ENCODE measurements at regions of chr2 and their contacts with region 1.

Region 1: DNA sequence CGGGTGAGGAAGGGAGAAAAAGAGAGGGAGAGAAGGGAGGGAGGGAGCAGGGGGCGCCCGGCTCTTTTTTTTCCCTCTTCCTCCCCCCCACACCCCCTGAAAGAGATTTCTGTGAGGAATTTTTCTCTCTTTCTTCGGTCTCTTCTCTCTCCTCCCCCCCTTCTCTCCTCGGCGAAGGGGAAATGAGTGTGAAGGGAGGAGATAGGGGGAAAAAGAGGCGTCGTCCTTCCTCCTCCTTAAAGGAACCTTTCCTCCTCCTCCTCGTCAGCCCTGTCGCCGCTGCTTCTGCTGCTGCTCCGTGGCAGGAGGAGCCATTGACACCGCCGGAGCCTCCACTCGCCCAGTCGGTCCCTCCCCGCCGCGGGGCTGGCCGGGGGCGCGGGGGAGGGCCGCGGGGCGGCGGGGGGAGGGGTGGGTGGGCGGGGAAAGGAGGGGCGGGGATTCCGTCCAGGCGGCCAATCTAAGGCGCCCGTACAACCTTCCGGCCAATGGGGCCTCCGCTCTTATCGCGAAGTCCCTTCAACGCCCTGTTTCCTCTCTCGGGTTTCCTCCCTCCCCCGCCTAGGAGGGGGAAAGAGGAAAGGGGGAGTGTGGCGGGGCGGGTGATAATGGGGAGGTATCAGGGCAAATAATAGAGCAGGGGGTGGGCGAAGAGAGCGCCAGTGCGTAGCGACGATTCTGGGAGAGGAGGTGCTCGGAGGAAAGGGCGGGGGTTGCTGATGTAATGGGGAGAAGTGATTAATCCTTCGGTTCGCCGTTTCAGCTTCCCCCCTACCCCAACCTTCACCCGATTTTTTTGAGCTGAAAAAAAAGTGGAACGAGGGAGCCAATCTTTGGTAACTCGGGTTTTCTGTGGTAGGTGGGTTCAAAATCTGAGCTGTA is at the start of gene FBXO11:
- DNase-seq: peak; percentile 94
- H3K4me3 Mint-ChIP-seq: peak within 1 kb of the TSS; percentile 88
- H3K27ac Mint-ChIP-seq: peak within 1 kb of the TSS; percentile 93
- H3K4me1 Mint-ChIP-seq: peaks cover 40% of the 10 kb centered on the region
- H3K27me3 Mint-ChIP-seq: no peaks in the 10 kb centered on the region
- total RNA-seq, gene FBXO11: 50.1 and 56.1 TPM in 2 replicates

Region 2: GRCh38 chr2:46943881-46944798 is 962.3 kb before region 1 on chr2:
- intact Hi-C with region 1: loop called (anchors 2 kb)
- DNase-seq: peak; percentile 75
- H3K4me3 Mint-ChIP-seq: peak overlapping the region; percentile 99
- H3K27ac Mint-ChIP-seq: peak overlapping the region; percentile 99
- H3K4me1 Mint-ChIP-seq: peaks cover 59% of the 10 kb centered on the region
- H3K27me3 Mint-ChIP-seq: no peaks in the 10 kb centered on the region

Region 3: DNA sequence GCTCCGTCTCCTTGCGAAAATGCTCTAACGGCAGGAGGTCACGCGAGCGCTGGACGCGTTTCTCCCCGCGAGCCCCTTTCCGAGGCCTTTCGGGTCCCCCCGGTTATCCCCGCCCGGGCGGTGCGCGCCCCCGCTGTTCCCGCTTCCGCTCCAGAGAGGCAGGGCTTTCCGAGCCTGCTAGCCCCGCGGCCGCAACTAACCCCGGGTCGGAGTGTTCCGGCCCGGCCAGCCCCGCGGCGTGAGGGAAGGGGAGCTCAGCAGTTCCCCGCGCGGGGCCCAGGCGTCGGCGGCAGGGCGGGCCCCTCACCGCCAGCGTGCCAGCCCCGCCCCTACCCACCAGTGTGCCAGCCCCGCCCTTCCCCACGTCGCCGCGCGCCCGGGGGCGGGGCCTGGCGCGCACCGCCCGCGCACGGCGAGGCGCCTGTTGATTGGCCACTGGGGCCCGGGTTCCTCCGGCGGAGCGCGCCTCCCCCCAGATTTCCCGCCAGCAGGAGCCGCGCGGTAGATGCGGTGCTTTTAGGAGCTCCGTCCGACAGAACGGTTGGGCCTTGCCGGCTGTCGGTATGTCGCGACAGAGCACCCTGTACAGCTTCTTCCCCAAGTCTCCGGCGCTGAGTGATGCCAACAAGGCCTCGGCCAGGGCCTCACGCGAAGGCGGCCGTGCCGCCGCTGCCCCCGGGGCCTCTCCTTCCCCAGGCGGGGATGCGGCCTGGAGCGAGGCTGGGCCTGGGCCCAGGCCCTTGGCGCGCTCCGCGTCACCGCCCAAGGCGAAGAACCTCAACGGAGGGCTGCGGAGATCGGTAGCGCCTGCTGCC is 123.5 kb before region 1 on chr2 and contains the start of gene MSH6:
- intact Hi-C with region 1: loop called (anchors 1 kb)
- DNase-seq: peak; percentile 89
- H3K4me3 Mint-ChIP-seq: peak within 1 kb of the TSS; percentile 91
- H3K27ac Mint-ChIP-seq: peak within 1 kb of the TSS; percentile 84
- H3K4me1 Mint-ChIP-seq: peaks cover 21% of the 10 kb centered on the region
- H3K27me3 Mint-ChIP-seq: no peaks in the 10 kb centered on the region
- total RNA-seq, gene MSH6: 123 and 128 TPM in 2 replicates

Region 4: GRCh38 chr2:48006094-48006493 is 99.7 kb after region 1 on chr2:
- intact Hi-C with region 1: no loop called
- DNase-seq: no peak
- H3K4me3 Mint-ChIP-seq: no peak overlapping the region
- H3K27ac Mint-ChIP-seq: no peak overlapping the region
- H3K4me1 Mint-ChIP-seq: no peaks in the 10 kb centered on the region
- H3K27me3 Mint-ChIP-seq: no peaks in the 10 kb centered on the region

Region 5: GRCh38 chr2:48343571-48344440 is 437.4 kb after region 1 on chr2:
- intact Hi-C with region 1: loop called (anchors 1 kb)
- DNase-seq: peak; percentile 11
- H3K4me3 Mint-ChIP-seq: peak overlapping the region; percentile 35
- H3K27ac Mint-ChIP-seq: peak overlapping the region; percentile 61
- H3K4me1 Mint-ChIP-seq: peaks cover 54% of the 10 kb centered on the region
- H3K27me3 Mint-ChIP-seq: no peaks in the 10 kb centered on the region

Region 6: DNA sequence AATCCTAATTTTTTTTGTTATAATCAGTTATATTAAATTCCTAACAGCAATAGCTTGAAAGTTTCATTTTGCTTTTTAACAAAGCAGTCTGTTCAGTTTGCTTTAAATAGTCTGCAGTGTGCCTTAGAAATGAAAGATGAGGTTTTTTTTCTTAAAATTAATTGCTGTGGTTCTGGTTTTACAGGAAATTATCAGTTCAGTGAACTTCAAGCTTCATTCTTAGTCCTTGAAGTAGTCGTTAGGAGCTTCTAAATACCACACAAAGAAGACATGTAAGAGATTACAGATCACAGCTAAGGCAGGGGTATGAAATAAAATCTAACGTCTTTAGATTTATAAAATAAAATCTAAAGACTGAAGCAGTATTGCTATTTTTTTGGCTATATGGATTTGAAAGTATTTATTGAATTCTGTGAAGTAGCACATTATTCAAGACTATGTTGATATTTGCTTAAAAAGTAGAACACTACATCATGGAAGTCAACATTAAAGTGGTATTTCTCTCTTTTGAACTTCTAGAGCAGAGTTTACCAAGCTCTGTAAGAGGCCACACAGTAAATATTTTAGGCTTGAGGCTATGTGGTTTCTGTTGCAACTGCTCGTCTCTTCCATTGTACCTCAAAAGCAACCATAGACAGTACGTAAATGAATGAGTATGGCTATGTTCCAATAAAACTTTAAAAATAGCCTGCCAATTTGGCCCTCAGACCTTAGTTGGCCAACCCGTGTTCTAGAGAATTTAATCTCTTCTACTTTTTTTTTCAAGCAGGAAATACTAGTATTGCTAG is 542.1 kb after region 1 on chr2:
- intact Hi-C with region 1: loop called (anchors 2 kb)
- DNase-seq: no peak
- H3K4me3 Mint-ChIP-seq: peak overlapping the region; percentile 81
- H3K27ac Mint-ChIP-seq: peak overlapping the region; percentile 95
- H3K4me1 Mint-ChIP-seq: peaks cover 53% of the 10 kb centered on the region
- H3K27me3 Mint-ChIP-seq: no peaks in the 10 kb centered on the region